ENCODE measurements at regions of chr17 and their contacts with region 1.

Region 1: DNA sequence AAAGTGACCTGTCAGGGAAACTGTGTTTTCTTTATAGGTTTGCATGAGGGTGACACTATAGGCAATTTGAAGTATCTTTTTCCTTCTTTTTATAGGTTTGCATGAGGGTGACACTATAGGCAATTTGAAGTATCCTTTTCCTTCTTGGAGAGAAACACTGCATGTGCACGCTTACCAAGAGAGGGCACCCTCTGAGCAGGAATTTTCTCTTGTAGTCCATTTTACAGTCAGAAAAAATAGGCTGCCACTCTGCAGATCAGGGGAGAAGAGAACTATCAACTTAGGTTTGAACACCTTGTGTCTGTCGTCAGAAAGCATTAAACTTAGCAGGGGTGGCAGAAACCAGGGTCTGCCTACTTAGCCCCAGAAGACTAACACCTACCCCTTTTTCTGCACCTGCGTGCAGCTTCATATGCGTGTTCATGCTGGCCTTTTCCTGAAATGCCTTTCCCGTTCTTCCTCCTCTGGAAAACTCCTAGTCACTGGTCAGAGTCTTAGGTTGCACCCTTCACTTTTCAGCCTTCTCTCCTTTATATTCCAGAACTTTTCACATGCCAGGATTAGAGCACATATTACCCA is 16.4 kb upstream of the SMIM36 start:
- DNase-seq: no peak
- H3K4me3 ChIP-seq: no peak overlapping the region
- H3K27ac ChIP-seq: no peak overlapping the region
- H3K4me1 ChIP-seq: no peaks in the 10 kb centered on the region
- H3K27me3 ChIP-seq: no peaks in the 10 kb centered on the region
- CTCF ChIP-seq: peak; percentile 30 to 71 (median 38)
- EP300 ChIP-seq: no peak
- POLR2A ChIP-seq: no peak

Region 2: GRCh38 chr17:55588446-55589242 is 61.0 kb after region 1 on chr17:
- intact Hi-C with region 1: no loop called
- DNase-seq: no peak
- H3K4me3 ChIP-seq: no peak overlapping the region
- H3K27ac ChIP-seq: peak overlapping the region in 3 of 4 donors; percentile 43 to 58 (median 47)
- H3K4me1 ChIP-seq: peaks cover 0 to 21% (median 14%) of the 10 kb centered on the region in 4 donors
- H3K27me3 ChIP-seq: no peaks in the 10 kb centered on the region
- CTCF ChIP-seq: no peak
- EP300 ChIP-seq: no peak
- POLR2A ChIP-seq: no peak

Region 3: GRCh38 chr17:55607731-55608341 is 80.2 kb after region 1 on chr17:
- intact Hi-C with region 1: loop called (anchors 5 kb)
- DNase-seq: peak; percentile 96
- H3K4me3 ChIP-seq: no peak overlapping the region
- H3K27ac ChIP-seq: peak overlapping the region; percentile 46 to 66 (median 56)
- H3K4me1 ChIP-seq: peaks cover 3 to 62% (median 52%) of the 10 kb centered on the region in 4 donors
- H3K27me3 ChIP-seq: no peaks in the 10 kb centered on the region
- CTCF ChIP-seq: no peak
- EP300 ChIP-seq: peak in 1 of 4 donors; percentile 43
- POLR2A ChIP-seq: no peak

Region 4: DNA sequence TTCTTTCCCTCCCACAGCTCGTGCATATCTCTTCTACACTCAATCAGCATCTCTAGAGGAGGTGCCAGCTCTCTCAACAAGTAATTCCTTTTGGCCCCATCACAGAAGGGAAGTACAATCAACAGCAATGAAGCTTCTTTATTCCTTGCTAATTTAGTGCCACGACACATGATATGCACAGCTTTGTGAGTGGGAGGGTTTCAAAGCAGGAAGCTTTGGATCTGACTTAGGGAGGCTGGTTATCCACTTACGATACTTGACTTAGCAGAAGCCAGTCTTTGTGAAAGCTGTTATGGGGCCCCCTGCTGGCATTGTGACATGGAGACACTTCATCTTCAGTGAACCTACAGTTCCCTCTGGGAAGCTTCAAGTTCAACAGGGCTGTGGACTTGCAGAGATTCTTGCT is 114.0 kb after region 1 on chr17:
- intact Hi-C with region 1: loop called (anchors 2 kb)
- DNase-seq: peak; percentile 90
- H3K4me3 ChIP-seq: no peak overlapping the region
- H3K27ac ChIP-seq: no peak overlapping the region
- H3K4me1 ChIP-seq: peaks cover 0 to 7% (median 5%) of the 10 kb centered on the region in 4 donors
- H3K27me3 ChIP-seq: no peaks in the 10 kb centered on the region
- CTCF ChIP-seq: peak; percentile 33 to 58 (median 38)
- EP300 ChIP-seq: no peak
- POLR2A ChIP-seq: no peak

Region 5: GRCh38 chr17:55717898-55718735 is 190.5 kb after region 1 on chr17:
- intact Hi-C with region 1: loop called (anchors 1 kb)
- DNase-seq: peak; percentile 92
- H3K4me3 ChIP-seq: no peak overlapping the region
- H3K27ac ChIP-seq: no peak overlapping the region
- H3K4me1 ChIP-seq: peaks cover 0 to 29% (median 25%) of the 10 kb centered on the region in 4 donors
- H3K27me3 ChIP-seq: no peaks in the 10 kb centered on the region
- CTCF ChIP-seq: peak; percentile 58 to 73 (median 71)
- EP300 ChIP-seq: no peak
- POLR2A ChIP-seq: no peak

Region 6: GRCh38 chr17:55770148-55770870 is 242.7 kb after region 1 on chr17:
- intact Hi-C with region 1: loop called (anchors 1 kb)
- DNase-seq: no peak
- H3K4me3 ChIP-seq: no peak overlapping the region
- H3K27ac ChIP-seq: peak overlapping the region in 3 of 4 donors; percentile 36 to 63 (median 48)
- H3K4me1 ChIP-seq: peaks cover 0 to 21% (median 19%) of the 10 kb centered on the region in 4 donors
- H3K27me3 ChIP-seq: no peaks in the 10 kb centered on the region
- CTCF ChIP-seq: peak; percentile 31 to 62 (median 57)
- EP300 ChIP-seq: no peak
- POLR2A ChIP-seq: no peak